Body of pancreas (tissue), 4 donors: ENCODE measurements at regions of chr6 and their contacts with region 1.

Region 1: GRCh38 chr6:151323791-151324487 is 67.4 kb downstream of the ZBTB2 start:
- DNase-seq: peak; percentile 76 to 84 (median 79)
- ATAC-seq: peak; percentile 87
- H3K4me3 ChIP-seq: no peak overlapping the region
- H3K27ac ChIP-seq: no peak overlapping the region
- H3K4me1 ChIP-seq: peaks cover 26% of the 10 kb centered on the region
- H3K27me3 ChIP-seq: no peaks in the 10 kb centered on the region
- CTCF ChIP-seq: peak; percentile 89 to 99 (median 95)
- POLR2A ChIP-seq: no peak

Region 2: DNA sequence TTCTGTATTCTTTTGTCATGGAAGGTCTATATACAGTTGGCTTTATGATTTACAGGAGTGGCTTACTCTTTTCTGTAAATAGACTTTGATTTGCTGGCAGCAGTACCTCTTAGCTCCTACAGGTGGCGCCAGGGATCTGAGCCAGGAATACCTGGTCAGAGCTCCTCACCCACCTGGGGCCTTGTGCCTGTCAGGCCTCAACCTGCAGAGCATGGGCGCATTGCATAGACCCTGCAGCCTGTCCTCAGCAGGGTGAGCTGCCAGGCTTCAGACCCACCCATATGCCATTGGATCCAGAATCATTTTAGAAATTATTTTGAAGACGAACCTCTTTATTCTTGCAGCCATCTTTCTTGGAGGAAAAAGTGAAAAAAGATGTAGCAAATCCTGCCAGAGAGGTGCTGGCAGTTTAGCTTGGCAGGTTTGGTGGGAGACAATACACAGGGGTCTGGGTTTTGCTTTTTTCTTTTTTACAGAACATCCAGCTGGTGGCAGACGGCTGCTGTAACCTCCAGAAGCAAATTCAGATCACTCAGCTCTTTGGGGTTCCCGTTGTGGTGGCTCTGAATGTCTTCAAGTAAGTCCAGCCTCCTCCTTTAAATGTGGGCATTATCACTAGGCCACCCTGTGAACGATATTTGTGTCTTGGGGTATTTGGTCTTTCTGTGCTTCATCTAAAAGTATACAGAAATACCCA is 309.4 kb before region 1 on chr6:
- intact Hi-C with region 1: loop called (anchors 5 kb)
- DNase-seq: peak; percentile 78 to 87 (median 81)
- ATAC-seq: peak; percentile 89
- H3K4me3 ChIP-seq: no peak overlapping the region
- H3K27ac ChIP-seq: no peak overlapping the region
- H3K4me1 ChIP-seq: peaks cover 24% of the 10 kb centered on the region
- H3K27me3 ChIP-seq: no peaks in the 10 kb centered on the region
- CTCF ChIP-seq: peak; percentile 96 to 98 (median 97)
- POLR2A ChIP-seq: no peak

Region 3: DNA sequence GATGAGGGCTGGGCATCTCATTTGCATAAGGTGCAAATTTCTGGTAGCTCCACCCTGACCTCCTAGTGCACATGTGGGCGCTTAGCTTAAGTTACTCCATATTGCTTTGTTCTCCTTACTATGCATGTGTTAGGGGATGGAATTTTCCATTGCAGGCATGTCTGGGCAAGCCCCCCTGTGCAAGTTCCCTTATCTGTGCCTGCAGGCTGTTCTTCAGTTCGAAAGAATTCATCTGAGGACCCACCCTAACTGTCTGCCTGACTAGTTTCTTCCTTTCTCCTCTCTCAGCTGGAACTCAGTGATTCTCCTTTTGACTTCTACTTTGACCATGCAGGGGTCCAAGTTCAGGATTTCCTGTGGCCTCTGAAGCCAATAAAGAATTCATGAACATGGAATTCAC is 200.1 kb after region 1 on chr6:
- intact Hi-C with region 1: no loop called
- DNase-seq: no peak
- ATAC-seq: no peak
- H3K4me3 ChIP-seq: no peak overlapping the region
- H3K27ac ChIP-seq: no peak overlapping the region
- H3K4me1 ChIP-seq: no peaks in the 10 kb centered on the region
- H3K27me3 ChIP-seq: no peaks in the 10 kb centered on the region
- CTCF ChIP-seq: no peak
- POLR2A ChIP-seq: no peak

Region 4: DNA sequence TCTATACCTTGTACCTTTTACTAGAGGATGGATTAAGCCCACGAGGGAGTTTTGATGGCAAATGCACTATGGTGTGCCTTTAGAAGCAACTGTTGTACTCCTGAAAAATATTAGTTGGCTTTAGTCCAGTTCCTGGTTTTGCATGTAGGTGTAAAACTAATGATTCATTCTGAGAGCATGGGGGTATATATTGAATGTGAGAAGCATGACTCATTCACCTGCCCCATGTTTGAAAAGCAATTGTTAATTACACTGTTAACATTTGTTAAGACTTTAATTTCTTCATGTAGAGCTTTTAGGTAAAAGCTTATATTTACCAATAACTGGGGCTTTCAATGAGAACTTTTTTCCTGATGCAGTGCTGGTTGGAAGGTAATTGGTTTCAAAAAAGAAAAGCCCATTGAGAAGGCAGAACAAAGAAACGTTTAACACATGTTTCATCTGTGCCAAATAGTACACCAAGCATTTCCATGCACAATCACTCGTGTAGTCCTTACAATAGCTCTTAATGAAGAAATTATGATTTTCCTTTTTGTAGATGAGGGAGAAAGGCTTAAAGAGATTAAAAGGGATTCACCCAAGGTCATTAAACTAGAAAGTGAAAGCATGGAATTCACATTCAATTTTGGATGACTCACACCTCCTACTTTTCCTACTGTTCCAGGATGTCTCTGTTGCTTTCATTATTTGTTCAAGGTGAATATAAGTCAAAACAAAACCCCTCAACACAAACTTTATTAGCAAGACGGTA is 303.9 kb after region 1 on chr6:
- intact Hi-C with region 1: no loop called
- DNase-seq: no peak
- ATAC-seq: no peak
- H3K4me3 ChIP-seq: no peak overlapping the region
- H3K27ac ChIP-seq: peak overlapping the region in 1 of 4 donors; percentile 7
- H3K4me1 ChIP-seq: peaks cover 3% of the 10 kb centered on the region
- H3K27me3 ChIP-seq: no peaks in the 10 kb centered on the region
- CTCF ChIP-seq: no peak
- POLR2A ChIP-seq: no peak